ENCODE measurements at regions of chr9 and their contacts with region 1.

Region 1: GRCh38 chr9:93566408-93567270 is 9.7 kb upstream of the PHF2 start:
- DNase-seq: peak; percentile 99
- H3K4me3 Mint-ChIP-seq: peak overlapping the region; percentile 90
- H3K27ac Mint-ChIP-seq: peak overlapping the region; percentile 92
- H3K4me1 Mint-ChIP-seq: peaks cover 26% of the 10 kb centered on the region
- H3K27me3 Mint-ChIP-seq: no peaks in the 10 kb centered on the region

Region 2: GRCh38 chr9:92877531-92878430 is 688.9 kb before region 1 on chr9 and contains the start of gene ZNF484:
- CTCF ChIA-PET with region 1: no interaction called
- intact Hi-C with region 1: loop called (anchors 5 kb)
- DNase-seq: peak; percentile 99
- H3K4me3 Mint-ChIP-seq: peak within 1 kb of the TSS; percentile 87
- H3K27ac Mint-ChIP-seq: peak within 1 kb of the TSS; percentile 94
- H3K4me1 Mint-ChIP-seq: peaks cover 40% of the 10 kb centered on the region
- H3K27me3 Mint-ChIP-seq: no peaks in the 10 kb centered on the region
- total RNA-seq, gene ZNF484: 5.8 to 6.5 TPM

Region 3: GRCh38 chr9:92954049-92954861 is 612.4 kb before region 1 on chr9:
- CTCF ChIA-PET with region 1: no interaction called
- intact Hi-C with region 1: loop called (anchors 5 kb)
- DNase-seq: peak; percentile 95
- H3K4me3 Mint-ChIP-seq: peak overlapping the region; percentile 60
- H3K27ac Mint-ChIP-seq: peak overlapping the region; percentile 91
- H3K4me1 Mint-ChIP-seq: peaks cover 75% of the 10 kb centered on the region
- H3K27me3 Mint-ChIP-seq: no peaks in the 10 kb centered on the region

Region 4: DNA sequence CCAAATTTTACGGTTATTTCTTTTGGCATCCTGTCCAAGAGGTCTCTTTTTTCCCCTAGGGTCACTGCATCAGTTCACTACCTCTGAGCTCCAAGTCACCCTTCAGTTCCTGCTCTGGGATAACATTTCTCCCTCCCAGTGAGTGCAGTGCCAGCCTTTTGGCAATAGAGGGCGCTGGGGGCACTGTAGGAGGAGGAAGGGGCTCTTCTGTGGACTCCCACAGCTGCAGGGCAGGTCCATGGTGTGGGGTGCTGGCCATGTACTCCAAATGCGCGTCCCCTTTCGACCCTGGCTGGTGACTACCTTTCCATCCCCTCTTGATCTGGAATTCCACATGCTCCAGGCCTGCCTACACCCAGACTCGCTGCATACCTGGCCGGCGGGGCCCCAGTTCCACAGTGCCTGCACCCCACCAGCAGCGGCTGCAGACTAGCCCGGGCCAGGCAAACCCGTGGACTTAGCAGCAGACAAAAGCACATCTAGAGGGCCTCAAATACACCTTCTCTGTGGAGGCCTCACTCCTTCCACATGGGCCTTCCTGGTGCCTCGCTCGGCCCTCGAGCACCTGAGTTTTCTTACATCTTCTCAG is 412.2 kb before region 1 on chr9:
- CTCF ChIA-PET with region 1: interaction called, 4 read pairs
- intact Hi-C with region 1: loop called (anchors 2 kb)
- DNase-seq: peak; percentile 75
- H3K4me3 Mint-ChIP-seq: no peak overlapping the region
- H3K27ac Mint-ChIP-seq: no peak overlapping the region
- H3K4me1 Mint-ChIP-seq: peaks cover 25% of the 10 kb centered on the region
- H3K27me3 Mint-ChIP-seq: no peaks in the 10 kb centered on the region

Region 5: GRCh38 chr9:93302551-93303257 is 263.9 kb before region 1 on chr9:
- CTCF ChIA-PET with region 1: no interaction called
- intact Hi-C with region 1: loop called (anchors 10 kb)
- DNase-seq: peak; percentile 73
- H3K4me3 Mint-ChIP-seq: no peak overlapping the region
- H3K27ac Mint-ChIP-seq: no peak overlapping the region
- H3K4me1 Mint-ChIP-seq: no peaks in the 10 kb centered on the region
- H3K27me3 Mint-ChIP-seq: no peaks in the 10 kb centered on the region

Region 6: DNA sequence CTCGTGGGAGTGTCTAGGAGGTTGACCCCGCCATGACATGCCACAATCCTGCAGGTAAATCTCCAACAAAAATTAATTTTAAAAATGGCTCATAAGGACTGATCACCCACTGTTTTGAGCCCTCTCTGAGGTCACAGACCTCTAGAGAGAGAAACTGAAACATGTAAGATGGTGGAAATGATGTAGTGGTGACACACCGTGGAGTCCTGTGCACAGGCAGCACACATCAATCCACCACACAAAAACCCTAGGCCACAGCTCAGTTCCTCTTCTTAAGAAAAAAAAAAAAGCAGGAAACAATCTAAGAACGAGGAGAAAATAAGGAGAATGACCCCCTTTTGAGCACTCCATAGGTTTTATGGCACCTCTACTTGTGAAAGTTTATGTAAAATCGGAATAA is 209.0 kb before region 1 on chr9:
- CTCF ChIA-PET with region 1: no interaction called
- intact Hi-C with region 1: no loop called
- DNase-seq: peak; percentile 26
- H3K4me3 Mint-ChIP-seq: no peak overlapping the region
- H3K27ac Mint-ChIP-seq: no peak overlapping the region
- H3K4me1 Mint-ChIP-seq: peaks cover 6% of the 10 kb centered on the region
- H3K27me3 Mint-ChIP-seq: no peaks in the 10 kb centered on the region

Region 7: GRCh38 chr9:93397661-93398373 is 168.8 kb before region 1 on chr9:
- CTCF ChIA-PET with region 1: no interaction called
- intact Hi-C with region 1: loop called (anchors 1 kb)
- DNase-seq: no peak
- H3K4me3 Mint-ChIP-seq: no peak overlapping the region
- H3K27ac Mint-ChIP-seq: no peak overlapping the region
- H3K4me1 Mint-ChIP-seq: no peaks in the 10 kb centered on the region
- H3K27me3 Mint-ChIP-seq: no peaks in the 10 kb centered on the region

Region 8: GRCh38 chr9:93549611-93550010 is 17.0 kb before region 1 on chr9:
- CTCF ChIA-PET with region 1: interaction called, 11 read pairs
- intact Hi-C with region 1: no loop called
- DNase-seq: no peak
- H3K4me3 Mint-ChIP-seq: no peak overlapping the region
- H3K27ac Mint-ChIP-seq: peak overlapping the region; percentile 32
- H3K4me1 Mint-ChIP-seq: no peaks in the 10 kb centered on the region
- H3K27me3 Mint-ChIP-seq: no peaks in the 10 kb centered on the region

Region 9: DNA sequence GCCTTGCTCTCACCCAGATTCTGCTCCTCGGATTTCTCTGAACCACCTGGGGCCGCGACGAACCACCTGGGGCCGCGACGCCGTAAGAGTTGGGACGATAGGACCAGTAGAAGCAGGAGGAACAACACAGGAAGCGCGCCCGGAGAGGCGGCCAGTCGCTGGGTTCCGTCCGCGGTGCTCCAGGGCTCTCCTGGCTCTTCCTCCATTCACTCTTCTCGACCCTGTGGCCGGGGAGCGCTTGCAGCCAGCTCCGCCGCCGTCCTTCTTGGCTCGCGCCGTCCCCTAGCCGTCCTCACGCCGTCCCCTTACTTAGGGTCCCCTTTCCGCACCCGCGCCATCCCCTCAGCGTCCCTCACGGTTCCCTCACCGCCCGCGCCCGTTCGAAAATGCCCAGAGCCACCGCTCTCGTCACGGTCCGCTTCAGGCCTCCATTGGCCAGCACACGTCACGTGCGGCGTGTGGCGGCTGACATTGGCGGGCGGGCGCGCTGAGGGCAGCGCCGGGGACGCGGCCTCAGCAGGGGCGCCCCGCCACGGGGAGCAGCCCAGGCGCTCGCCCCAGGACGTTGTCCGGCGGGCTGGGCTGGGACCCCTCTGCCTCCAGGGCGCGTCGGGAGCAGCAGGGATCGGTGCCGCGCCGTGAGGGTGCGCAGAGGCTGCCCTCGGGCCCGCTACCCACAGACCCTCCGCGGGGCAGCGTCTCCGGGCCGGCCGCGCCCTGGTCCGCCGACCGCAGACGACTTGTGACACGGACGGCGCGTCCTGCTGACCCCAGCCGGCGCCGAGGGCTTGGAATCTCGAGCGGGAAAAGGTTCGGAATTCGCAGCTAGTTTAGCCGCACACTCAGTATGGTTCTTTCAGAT is 463.9 kb after region 1 on chr9:
- CTCF ChIA-PET with region 1: no interaction called
- intact Hi-C with region 1: no loop called
- DNase-seq: peak; percentile 84
- H3K4me3 Mint-ChIP-seq: peak overlapping the region; percentile 100
- H3K27ac Mint-ChIP-seq: peak overlapping the region; percentile 96
- H3K4me1 Mint-ChIP-seq: peaks cover 24% of the 10 kb centered on the region
- H3K27me3 Mint-ChIP-seq: peaks cover 2% of the 10 kb centered on the region

Region 10: DNA sequence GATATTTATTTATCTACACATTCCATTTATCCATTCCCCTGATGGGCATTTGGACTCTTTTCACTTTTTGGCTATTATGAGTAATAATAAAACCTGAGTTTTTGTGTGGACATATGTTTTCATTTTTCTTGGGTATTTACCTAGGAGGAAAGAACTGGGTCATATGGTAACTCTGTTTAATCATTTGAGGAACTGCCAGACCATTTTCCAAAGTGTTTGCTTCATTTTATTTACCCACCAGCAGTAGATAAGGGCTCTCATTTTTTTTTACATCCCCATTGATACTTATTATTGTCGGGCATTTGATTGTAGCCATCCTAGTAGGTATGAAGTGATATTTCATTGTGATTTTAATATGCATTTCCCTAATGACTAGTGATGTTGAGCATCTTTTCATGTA is 509.9 kb after region 1 on chr9:
- CTCF ChIA-PET with region 1: no interaction called
- intact Hi-C with region 1: no loop called
- DNase-seq: no peak
- H3K4me3 Mint-ChIP-seq: no peak overlapping the region
- H3K27ac Mint-ChIP-seq: no peak overlapping the region
- H3K4me1 Mint-ChIP-seq: no peaks in the 10 kb centered on the region
- H3K27me3 Mint-ChIP-seq: no peaks in the 10 kb centered on the region

Measured in activated naive CD4-positive, alpha-beta T cell treated with anti-CD3 and anti-CD28 coated beads for 36 hours (primary cell).